ENCODE measurements at regions of chr7 and their contacts with region 1.

Region 1: DNA sequence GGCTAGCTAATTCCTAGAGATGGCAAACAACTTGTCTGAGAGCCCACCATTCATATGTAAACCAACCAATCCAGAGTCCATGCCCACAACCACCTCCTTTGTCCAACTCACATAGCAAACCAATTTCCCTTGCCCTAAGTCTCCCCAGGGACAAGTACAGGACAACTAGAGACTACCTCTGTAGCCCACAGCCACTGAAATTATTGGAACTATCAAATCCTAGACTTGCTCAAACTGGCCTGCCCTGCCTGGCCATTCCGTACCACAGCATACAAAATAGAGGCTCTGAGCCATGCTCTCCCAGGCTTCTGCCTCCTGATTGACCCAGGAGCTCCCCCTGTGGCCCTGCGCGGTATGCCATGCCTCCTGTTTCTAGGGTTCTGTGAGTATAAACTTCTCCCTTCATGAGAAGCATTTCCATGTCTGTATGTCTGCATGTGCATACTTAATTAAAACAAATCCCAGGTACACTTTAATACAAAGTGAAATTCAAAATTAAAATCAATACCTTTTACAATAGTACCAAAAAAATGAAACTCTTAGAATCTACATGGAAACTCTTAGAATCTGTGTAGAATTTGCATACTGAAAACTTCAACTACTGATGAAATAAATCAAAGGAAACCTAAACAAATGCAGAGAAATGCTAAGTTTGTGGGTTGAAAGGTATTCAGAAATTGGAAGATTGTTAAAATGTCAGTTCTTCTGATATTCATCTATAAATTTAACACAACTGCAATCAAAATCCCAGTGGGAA is 4.0 kb upstream of the HECW1 start:
- DNase-seq: no peak
- H3K4me3 ChIP-seq: no peak overlapping the region
- CTCF ChIP-seq: peak; percentile 92

Region 2: DNA sequence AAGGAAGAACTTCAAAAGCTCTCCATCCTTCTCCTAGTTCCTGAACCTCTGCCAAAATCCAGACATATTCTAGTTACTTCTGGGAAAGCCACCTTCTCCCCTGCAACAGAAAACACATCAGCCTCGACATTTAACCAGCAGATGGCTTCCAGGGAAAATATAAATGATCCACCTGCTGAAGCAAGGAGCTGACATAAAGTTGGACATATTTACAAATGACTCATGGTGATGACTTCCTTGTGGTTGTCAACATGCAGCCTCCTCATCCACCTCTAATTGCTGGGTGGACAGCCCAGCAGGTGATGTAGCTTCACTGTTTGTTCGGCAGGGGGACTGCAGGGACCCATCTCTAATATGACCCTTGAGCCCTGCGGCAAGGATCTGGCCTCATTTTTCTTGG is 462.5 kb before region 1 on chr7:
- CTCF ChIA-PET with region 1: no interaction called
- POLR2A ChIA-PET with region 1: no interaction called
- DNase-seq: no peak
- H3K4me3 ChIP-seq: no peak overlapping the region
- CTCF ChIP-seq: no peak

Region 3: GRCh38 chr7:43078794-43079193 is 29.6 kb before region 1 on chr7:
- CTCF ChIA-PET with region 1: interaction called, 10 read pairs
- POLR2A ChIA-PET with region 1: no interaction called
- DNase-seq: no peak
- H3K4me3 ChIP-seq: no peak overlapping the region
- CTCF ChIP-seq: no peak

Region 4: DNA sequence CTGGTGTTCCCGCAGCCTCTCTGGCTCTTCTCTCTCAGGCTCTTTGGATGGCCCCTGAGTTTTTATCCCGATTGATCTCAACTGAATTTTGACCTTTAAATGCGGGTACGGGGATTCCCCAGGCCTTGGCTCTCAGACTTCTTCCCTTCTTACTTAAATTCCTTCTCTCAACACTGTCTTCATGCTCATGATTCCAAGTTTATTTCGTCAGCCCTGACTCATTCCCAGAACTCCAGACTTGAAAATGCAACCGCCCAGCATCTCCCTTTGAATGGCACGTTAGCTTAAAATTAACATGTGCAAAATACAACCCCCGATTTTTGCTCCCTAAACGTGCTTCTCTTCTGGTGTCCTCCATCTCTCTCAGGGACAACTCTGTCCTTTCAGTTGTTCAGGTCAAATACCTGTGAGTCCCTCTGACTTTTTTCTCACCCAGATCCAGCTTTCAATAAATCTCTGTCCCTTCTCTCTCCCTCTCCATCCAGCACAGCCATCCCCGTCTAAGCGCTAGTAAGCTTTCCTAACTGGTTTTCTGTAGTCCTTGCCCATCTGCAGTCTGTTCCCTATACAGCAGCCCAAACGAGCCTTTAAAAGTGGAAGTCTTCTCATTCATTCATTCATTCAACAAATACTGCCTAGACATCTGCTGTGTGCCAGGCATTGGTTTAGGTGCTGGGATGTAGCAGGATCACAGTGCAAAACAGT is 11.1 kb after region 1 on chr7:
- CTCF ChIA-PET with region 1: interaction called, 21 read pairs
- POLR2A ChIA-PET with region 1: no interaction called
- DNase-seq: peak; percentile 65
- H3K4me3 ChIP-seq: no peak overlapping the region
- CTCF ChIP-seq: no peak

Region 5: DNA sequence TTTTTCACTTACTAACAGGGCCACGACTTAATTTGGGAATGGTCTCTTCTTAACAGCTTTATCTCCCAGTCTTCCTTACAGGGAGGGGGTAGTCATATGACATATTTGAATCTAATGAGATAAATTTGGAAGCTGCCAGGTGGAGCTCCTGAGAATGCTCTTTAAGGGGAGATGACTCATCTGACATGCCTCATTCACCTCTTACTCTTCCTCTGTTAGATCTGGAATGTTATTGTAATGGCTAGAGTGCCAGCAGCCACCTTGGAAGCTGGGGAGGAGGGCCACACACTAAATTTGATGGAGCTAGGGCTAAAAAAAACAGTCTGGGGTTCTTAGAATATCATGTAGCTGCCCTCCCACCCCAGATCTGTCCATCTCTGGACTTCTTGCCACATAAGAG is 26.7 kb after region 1 on chr7:
- CTCF ChIA-PET with region 1: interaction called, 10 read pairs
- POLR2A ChIA-PET with region 1: interaction called, 3 read pairs
- DNase-seq: no peak
- H3K4me3 ChIP-seq: no peak overlapping the region
- CTCF ChIP-seq: no peak

Region 6: DNA sequence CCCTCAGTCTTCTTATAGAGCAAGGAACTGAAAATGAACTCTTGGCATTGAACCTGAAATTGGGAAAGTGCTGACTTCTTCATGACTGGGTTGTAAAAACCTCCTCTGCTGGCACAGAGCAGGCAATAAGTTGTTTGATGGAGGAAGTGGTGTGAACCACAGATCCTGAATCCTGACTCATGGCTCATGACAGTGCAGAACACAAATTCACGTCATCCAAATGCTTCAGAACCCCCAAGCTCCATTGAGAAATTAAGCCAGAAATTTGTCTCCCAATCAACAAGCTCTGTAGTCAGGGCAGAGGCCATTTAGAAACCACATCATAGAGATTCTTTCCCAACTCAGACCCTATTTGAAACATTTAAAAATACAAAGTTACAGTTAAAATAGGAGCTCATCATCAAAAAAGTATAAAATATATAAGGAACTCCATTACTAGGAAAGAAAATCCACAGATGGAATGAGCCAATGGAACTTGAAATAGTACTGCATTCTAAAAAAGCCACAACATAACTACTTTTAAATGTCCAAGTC is 464.1 kb after region 1 on chr7:
- CTCF ChIA-PET with region 1: no interaction called
- POLR2A ChIA-PET with region 1: no interaction called
- DNase-seq: peak; percentile 100
- H3K4me3 ChIP-seq: no peak overlapping the region
- CTCF ChIP-seq: no peak

Measured in AG04449 (cell line).